ENCODE measurements at regions of chr6 and their contacts with region 1.

Region 1: DNA sequence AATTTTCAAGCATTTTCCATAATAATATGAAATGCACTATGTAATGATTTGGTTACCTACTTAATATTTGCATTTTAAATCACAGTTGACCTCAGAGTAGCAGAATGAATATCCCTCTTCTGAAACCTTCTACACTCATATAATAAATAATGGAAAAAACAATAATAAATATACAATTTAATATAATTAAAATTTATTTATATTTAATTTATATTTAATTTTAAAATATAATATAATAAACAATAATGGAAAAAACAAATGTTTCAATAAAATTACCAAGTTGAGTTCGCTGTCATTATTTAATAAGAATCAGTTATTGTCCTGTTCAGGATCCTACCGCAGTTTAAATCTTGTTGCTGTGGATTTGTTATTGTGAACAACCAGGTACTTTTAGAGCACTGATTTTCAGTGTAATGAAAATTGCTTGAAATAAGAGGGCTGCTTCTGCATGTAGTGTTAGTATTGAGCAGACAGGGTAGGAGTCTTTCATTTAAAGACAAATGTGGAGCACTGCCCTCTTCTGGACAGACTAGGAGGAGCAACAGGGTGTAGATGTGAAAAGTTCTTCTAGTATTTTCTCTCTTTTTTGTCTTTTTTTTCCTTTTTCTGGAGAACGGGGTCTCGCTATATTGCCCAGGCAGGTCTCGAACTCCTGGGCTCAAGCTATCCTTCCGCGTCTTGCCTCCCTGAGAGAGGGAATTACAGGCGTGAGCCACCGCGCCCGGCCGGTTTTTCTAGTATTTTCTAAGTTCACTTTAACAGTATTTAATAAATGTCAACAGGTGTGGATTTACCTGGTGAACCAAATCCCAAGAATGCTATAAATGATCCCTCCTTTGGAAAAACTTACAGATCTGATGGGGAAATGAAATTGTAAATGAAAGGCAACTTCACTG is 13.6 kb downstream of the TRAPPC3L start:
- DNase-seq: peak; percentile 66
- ATAC-seq: peak; percentile 83
- H3K4me3 ChIP-seq: no peak overlapping the region
- H3K27ac ChIP-seq: no peak overlapping the region
- H3K4me1 ChIP-seq: peaks cover 15% of the 10 kb centered on the region
- H3K27me3 ChIP-seq: peaks cover 0 to 13% of the 10 kb centered on the region in 2 experiments; a peak in 3 of 5 replicates
- CTCF ChIP-seq: peak; percentile 73
- EP300 ChIP-seq: no peak
- POLR2A ChIP-seq: no peak
- RAD21 ChIP-seq: peak; percentile 52; the same call in 1 of the 2 replicates

Region 2: DNA sequence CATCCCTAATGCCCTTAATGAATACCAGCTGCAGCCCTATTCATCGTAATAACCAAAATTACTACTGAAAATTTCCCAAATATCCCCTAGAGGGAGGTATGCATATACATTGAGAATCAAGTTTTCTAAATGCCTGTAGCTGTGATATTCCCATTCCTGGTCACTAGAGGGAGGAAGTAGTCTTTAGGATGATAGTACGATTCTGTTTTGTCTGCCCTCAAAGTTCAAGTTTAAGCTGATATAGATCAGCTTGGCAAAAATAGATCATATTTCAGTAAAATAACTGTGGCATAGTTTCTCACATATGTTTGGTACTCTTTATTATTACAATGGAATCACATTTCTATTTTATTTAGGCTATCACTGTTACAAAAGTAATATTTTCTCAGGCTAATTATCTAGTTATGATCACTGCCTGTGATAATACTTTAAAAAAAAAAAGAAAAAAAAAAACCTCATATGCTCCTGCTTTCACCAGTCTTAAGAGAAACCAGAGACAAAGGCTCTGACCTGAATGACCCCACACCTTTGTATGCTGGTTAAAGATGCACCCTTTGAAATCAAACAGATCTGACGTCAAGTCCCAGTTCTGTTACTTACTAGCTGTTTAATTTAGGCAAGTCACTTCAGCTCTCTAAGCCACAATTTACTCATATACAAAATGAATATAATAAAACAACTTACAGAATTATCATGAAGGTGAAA is 263.2 kb before region 1 on chr6:
- CTCF ChIA-PET with region 1: interaction called, 13 read pairs
- POLR2A ChIA-PET with region 1: no interaction called
- in situ Hi-C with region 1: no loop called
- intact Hi-C with region 1: loop called (anchors 1 kb)
- DNase-seq: peak; percentile 88
- ATAC-seq: peak; percentile 93
- H3K4me3 ChIP-seq: no peak overlapping the region
- H3K27ac ChIP-seq: no peak overlapping the region
- H3K4me1 ChIP-seq: 0 out of 2 replicates have a peak, but pooled peaks cover 5% of the 10 kb centered on the region
- H3K27me3 ChIP-seq: no peaks in the 10 kb centered on the region
- CTCF ChIP-seq: peak; percentile 86
- EP300 ChIP-seq: no peak
- POLR2A ChIP-seq: no peak
- RAD21 ChIP-seq: peak; percentile 73

Region 3: DNA sequence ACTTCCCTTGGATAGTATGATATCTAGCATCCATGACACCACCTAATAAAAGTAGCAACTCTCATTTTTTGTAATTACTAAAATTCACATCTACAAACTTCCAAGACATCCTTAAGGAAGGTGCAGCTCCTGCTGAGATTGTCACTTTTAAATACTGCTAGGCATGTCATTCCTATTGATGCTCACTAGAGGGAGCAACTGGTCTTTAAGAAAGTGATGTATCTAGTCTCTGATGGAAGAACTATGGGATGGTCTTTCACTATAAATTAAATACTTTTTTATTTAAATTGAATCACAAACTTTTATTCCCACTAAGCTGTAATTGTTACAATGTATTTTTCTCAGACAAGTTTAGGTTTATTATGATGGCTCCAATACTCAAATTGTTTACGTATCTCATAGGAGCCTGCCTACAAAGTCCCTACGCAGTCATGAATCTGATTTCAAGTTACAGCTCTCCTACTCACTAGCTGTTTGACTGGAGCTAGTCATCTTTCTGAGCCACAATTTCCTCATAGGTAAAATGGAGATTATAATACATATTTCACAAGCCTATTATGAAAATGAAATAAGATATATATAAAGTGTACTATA is 244.1 kb before region 1 on chr6:
- CTCF ChIA-PET with region 1: interaction called, 21 read pairs
- POLR2A ChIA-PET with region 1: no interaction called
- in situ Hi-C with region 1: loop called (anchors 10 kb)
- intact Hi-C with region 1: loop called (anchors 1 kb)
- DNase-seq: peak; percentile 38
- ATAC-seq: peak; percentile 69
- H3K4me3 ChIP-seq: no peak overlapping the region
- H3K27ac ChIP-seq: no peak overlapping the region
- H3K4me1 ChIP-seq: no peaks in the 10 kb centered on the region
- H3K27me3 ChIP-seq: no peaks in the 10 kb centered on the region
- CTCF ChIP-seq: peak; percentile 80
- EP300 ChIP-seq: no peak
- POLR2A ChIP-seq: no peak
- RAD21 ChIP-seq: peak; percentile 23; the same call in 1 of the 2 replicates

Region 4: DNA sequence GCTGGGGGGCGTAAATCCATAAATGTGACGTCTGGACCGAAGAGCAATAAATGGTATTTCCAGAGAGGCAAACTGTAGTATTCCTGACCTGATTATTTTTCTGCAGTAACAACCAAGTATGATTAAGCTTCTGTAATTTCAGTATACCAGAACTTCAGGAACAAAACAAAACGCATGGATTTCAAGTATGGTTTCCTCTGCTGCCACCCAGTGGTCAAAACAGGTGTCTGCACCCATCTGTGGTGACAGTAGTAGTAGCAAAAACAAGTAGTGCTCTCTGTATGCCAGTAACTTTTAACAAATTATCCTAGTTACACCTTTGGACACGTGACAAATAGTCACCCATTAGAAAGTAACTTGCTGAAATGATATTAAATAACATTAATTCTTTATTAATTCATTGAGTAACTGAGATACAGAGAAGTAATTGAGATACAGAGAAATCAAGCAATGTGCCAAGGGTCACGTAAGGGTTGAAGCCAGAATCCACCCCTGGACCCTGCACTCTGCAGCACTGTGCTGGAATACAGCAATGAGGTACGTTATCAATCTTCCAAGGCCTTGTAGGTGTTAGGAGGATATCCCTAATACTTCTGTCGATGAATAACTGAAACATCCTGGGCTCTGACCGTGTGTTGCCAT is 29.6 kb after region 1 on chr6:
- CTCF ChIA-PET with region 1: interaction called, 43 read pairs
- POLR2A ChIA-PET with region 1: no interaction called
- in situ Hi-C with region 1: no loop called
- intact Hi-C with region 1: loop called (anchors 1 kb)
- DNase-seq: peak; percentile 70
- ATAC-seq: peak; percentile 78
- H3K4me3 ChIP-seq: peak overlapping the region in 2 of 3 experiments; percentile 13 to 28; a peak in 2 of 6 replicates
- H3K27ac ChIP-seq: no peak overlapping the region
- H3K4me1 ChIP-seq: peaks cover 31% of the 10 kb centered on the region
- H3K27me3 ChIP-seq: no peaks in the 10 kb centered on the region; a peak in 3 of 5 replicates
- CTCF ChIP-seq: peak; percentile 91
- EP300 ChIP-seq: no peak
- POLR2A ChIP-seq: no peak
- RAD21 ChIP-seq: peak; percentile 78

Region 5: GRCh38 chr6:116847227-116847626 is 315.3 kb after region 1 on chr6:
- CTCF ChIA-PET with region 1: no interaction called
- POLR2A ChIA-PET with region 1: no interaction called
- in situ Hi-C with region 1: no loop called
- intact Hi-C with region 1: loop called (anchors 10 kb)
- DNase-seq: peak; percentile 59
- ATAC-seq: peak; percentile 87
- H3K4me3 ChIP-seq: no peak overlapping the region
- H3K27ac ChIP-seq: no peak overlapping the region
- H3K4me1 ChIP-seq: peaks cover 16% of the 10 kb centered on the region
- H3K27me3 ChIP-seq: no peaks in the 10 kb centered on the region
- CTCF ChIP-seq: peak; percentile 62
- EP300 ChIP-seq: no peak
- POLR2A ChIP-seq: no peak
- RAD21 ChIP-seq: peak; percentile 55; the same call in 1 of the 2 replicates

Measured in HepG2 (cell line).